Activated CD4-positive, alpha-beta T cell treated with anti-CD3 and anti-CD28 coated beads for 36 hours (primary cell): ENCODE measurements at regions of chr1 and their contacts with region 1.

Region 1: DNA sequence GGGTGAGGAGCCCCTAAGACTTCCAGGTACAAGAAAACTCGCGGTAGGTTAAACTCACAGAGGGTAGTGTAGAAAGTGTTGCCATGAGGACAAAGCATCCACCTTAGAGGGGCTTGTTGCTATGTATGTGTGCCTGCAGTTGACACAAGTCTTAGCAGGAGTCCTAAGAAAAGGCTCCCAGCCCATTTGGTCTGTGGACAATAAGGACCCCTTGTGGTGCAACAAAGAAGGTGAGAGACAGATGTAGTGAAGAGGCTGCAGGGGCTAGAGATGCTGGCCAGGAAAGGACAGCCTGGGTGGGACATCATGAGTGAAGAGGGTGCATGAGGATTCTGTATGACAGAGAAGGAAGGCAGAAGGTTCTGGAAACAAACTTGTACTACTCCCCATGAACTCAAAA is 36.3 kb upstream of the IL10 start:
- DNase-seq: peak; percentile 63
- ATAC-seq: peak; percentile 83
- H3K4me3 Mint-ChIP-seq: no peak overlapping the region
- H3K27ac Mint-ChIP-seq: no peak overlapping the region
- H3K4me1 Mint-ChIP-seq: peaks cover 39% of the 10 kb centered on the region
- H3K27me3 Mint-ChIP-seq: peaks cover 2% of the 10 kb centered on the region

Region 2: DNA sequence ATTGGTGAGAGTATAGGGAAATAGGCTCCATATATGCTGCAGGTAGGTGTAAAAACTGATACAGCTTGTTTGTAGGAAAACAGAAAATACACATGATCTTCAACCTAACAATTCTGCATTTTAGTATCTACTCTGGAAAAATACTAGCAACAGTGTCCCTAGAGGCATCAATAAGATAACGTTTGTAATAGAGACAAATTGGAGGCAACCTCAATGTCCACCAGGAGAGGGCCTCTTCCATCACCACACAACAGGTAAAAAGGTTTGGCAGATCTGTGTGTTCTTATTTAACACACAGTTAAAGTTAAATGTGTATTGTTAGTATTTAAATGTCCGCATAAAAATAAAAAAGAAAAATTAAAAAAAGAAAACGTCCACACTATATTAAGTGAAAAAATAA is 201.8 kb before region 1 on chr1:
- CTCF ChIA-PET with region 1: interaction called, 3 read pairs
- POLR2A ChIA-PET with region 1: no interaction called
- intact Hi-C with region 1: loop called in 1 of 2 experiments (anchors 2 kb)
- DNase-seq: no peak
- ATAC-seq: no peak
- H3K4me3 Mint-ChIP-seq: no peak overlapping the region
- H3K27ac Mint-ChIP-seq: peak overlapping the region; percentile 64
- H3K4me1 Mint-ChIP-seq: peaks cover 45% of the 10 kb centered on the region
- H3K27me3 Mint-ChIP-seq: no peaks in the 10 kb centered on the region

Region 3: DNA sequence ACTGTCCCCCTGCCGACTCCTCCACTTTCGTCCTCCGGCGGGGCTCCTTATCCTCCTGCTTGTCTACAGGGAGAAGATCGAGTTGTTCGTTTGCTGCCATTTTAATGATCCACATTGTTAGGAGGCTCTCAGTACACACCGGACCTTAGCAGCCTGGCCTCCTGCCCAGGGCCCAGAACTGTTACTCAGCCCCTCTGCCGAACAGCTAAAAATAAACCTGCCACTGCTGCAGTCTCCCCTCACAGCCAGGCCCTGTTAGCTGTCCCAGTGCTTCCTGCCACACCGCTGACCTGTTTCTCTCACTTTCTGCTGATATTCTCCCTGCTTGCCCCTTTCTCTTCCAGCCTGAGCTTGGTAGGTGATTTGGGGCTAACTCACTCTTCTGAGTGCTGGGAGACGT is 115.6 kb before region 1 on chr1:
- CTCF ChIA-PET with region 1: no interaction called
- POLR2A ChIA-PET with region 1: no interaction called
- intact Hi-C with region 1: no loop called
- DNase-seq: no peak
- ATAC-seq: no peak
- H3K4me3 Mint-ChIP-seq: no peak overlapping the region
- H3K27ac Mint-ChIP-seq: peak overlapping the region; percentile 32
- H3K4me1 Mint-ChIP-seq: peaks cover 64% of the 10 kb centered on the region
- H3K27me3 Mint-ChIP-seq: no peaks in the 10 kb centered on the region

Region 4: GRCh38 chr1:206766251-206766856 is 42.3 kb before region 1 on chr1:
- CTCF ChIA-PET with region 1: interaction called, 21 read pairs
- POLR2A ChIA-PET with region 1: interaction called, 6 read pairs
- intact Hi-C with region 1: loop called (anchors 1 to 2 kb)
- DNase-seq: peak; percentile 82
- ATAC-seq: peak; percentile 64
- H3K4me3 Mint-ChIP-seq: peak overlapping the region; percentile 29
- H3K27ac Mint-ChIP-seq: peak overlapping the region; percentile 44
- H3K4me1 Mint-ChIP-seq: peaks cover 63% of the 10 kb centered on the region
- H3K27me3 Mint-ChIP-seq: peaks cover 10% of the 10 kb centered on the region

Region 5: DNA sequence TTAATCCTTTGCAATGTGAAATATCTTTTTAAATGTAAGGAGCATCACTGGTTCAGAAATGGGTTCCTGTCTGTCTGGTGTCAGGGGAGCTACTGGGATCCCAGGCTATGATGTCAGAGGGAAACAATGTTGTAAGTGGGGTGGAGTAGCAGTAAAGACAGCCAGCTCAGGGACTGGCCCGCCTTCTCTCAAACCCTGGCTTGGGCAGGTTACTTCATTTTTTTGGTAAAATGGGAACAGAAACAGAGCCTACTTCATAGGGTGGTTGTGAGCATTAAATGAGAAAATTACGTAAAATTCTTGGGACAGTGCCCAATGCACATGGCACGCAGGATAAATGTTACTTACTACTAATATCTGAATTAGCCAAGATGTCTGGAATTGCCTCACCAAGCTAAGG is 26.1 kb after region 1 on chr1:
- CTCF ChIA-PET with region 1: interaction called, 27 read pairs
- POLR2A ChIA-PET with region 1: no interaction called
- intact Hi-C with region 1: no loop called
- DNase-seq: no peak
- ATAC-seq: no peak
- H3K4me3 Mint-ChIP-seq: no peak overlapping the region
- H3K27ac Mint-ChIP-seq: no peak overlapping the region
- H3K4me1 Mint-ChIP-seq: peaks cover 5% of the 10 kb centered on the region
- H3K27me3 Mint-ChIP-seq: peaks cover 2% of the 10 kb centered on the region

Region 6: DNA sequence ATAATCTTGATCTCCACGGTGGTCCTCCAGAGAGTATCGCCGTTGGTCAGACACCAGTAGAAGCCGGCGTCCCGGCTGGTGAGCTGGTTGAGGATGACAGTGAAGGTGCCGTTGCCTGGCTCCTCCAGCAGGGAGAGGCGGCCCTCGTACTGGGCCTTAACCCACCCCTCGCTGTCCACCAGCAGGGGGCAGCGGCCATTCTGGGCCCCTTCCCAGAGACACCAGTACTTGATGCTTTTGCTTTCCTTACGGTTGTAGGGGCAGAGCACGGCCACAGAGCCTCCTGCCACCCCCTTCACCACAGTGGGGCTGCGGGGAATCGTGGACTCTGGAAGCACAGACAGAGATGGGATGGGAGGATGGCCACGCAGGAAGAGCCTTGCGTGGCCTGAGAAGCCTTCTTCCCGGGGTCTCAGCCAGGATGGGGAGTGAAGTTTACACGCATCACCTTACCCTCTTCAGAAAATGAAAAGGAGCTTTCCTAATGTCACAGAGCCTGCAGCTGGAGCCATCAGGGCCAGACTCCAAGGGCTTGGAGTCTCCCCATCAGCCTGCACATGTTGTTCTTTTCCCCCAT is 127.0 kb after region 1 on chr1:
- CTCF ChIA-PET with region 1: interaction called, 14 read pairs
- POLR2A ChIA-PET with region 1: no interaction called
- intact Hi-C with region 1: no loop called
- DNase-seq: peak; percentile 79
- ATAC-seq: peak; percentile 76
- H3K4me3 Mint-ChIP-seq: no peak overlapping the region
- H3K27ac Mint-ChIP-seq: no peak overlapping the region
- H3K4me1 Mint-ChIP-seq: peaks cover 23% of the 10 kb centered on the region
- H3K27me3 Mint-ChIP-seq: no peaks in the 10 kb centered on the region